CD4-positive, alpha-beta T cell (primary cell): ENCODE measurements at regions of chr5 and their contacts with region 1.

Region 1: GRCh38 chr5:180718810-180719453 is 20.9 kb downstream of the OR2Y1 start:
- DNase-seq: peak in 12 of 14 experiments; percentile 5 to 69 (median 24)
- ATAC-seq: no peak
- H3K4me3 ChIP-seq: no peak overlapping the region
- H3K4me3 Mint-ChIP-seq: no peak overlapping the region
- H3K27ac ChIP-seq: no peak overlapping the region
- H3K27ac Mint-ChIP-seq: no peak overlapping the region
- H3K4me1 ChIP-seq: no peaks in the 10 kb centered on the region
- H3K4me1 Mint-ChIP-seq: peaks cover 13% of the 10 kb centered on the region
- H3K27me3 ChIP-seq: no peaks in the 10 kb centered on the region
- H3K27me3 Mint-ChIP-seq: no peaks in the 10 kb centered on the region
- CTCF ChIP-seq: peak; percentile 86

Region 2: GRCh38 chr5:180523629-180524466 is 195.1 kb before region 1 on chr5:
- CTCF ChIA-PET with region 1: no interaction called
- POLR2A ChIA-PET with region 1: no interaction called
- intact Hi-C with region 1: loop called in 1 of 2 experiments (anchors 1 kb)
- DNase-seq: no peak
- ATAC-seq: no peak
- H3K4me3 ChIP-seq: no peak overlapping the region
- H3K4me3 Mint-ChIP-seq: no peak overlapping the region
- H3K27ac ChIP-seq: no peak overlapping the region
- H3K27ac Mint-ChIP-seq: peak overlapping the region; percentile 25
- H3K4me1 ChIP-seq: peaks cover 10% of the 10 kb centered on the region
- H3K4me1 Mint-ChIP-seq: peaks cover 71% of the 10 kb centered on the region
- H3K27me3 ChIP-seq: no peaks in the 10 kb centered on the region
- H3K27me3 Mint-ChIP-seq: no peaks in the 10 kb centered on the region
- CTCF ChIP-seq: no peak

Region 3: GRCh38 chr5:180605554-180606214 is 113.2 kb before region 1 on chr5:
- CTCF ChIA-PET with region 1: no interaction called
- POLR2A ChIA-PET with region 1: no interaction called
- intact Hi-C with region 1: loop called (anchors 5 to 10 kb)
- DNase-seq: peak; percentile 34 to 73 (median 50)
- ATAC-seq: peak; percentile 61
- H3K4me3 ChIP-seq: no peak overlapping the region
- H3K4me3 Mint-ChIP-seq: no peak overlapping the region
- H3K27ac ChIP-seq: no peak overlapping the region
- H3K27ac Mint-ChIP-seq: no peak overlapping the region
- H3K4me1 ChIP-seq: no peaks in the 10 kb centered on the region
- H3K4me1 Mint-ChIP-seq: no peaks in the 10 kb centered on the region
- H3K27me3 ChIP-seq: no peaks in the 10 kb centered on the region
- H3K27me3 Mint-ChIP-seq: no peaks in the 10 kb centered on the region
- CTCF ChIP-seq: peak; percentile 78

Region 4: DNA sequence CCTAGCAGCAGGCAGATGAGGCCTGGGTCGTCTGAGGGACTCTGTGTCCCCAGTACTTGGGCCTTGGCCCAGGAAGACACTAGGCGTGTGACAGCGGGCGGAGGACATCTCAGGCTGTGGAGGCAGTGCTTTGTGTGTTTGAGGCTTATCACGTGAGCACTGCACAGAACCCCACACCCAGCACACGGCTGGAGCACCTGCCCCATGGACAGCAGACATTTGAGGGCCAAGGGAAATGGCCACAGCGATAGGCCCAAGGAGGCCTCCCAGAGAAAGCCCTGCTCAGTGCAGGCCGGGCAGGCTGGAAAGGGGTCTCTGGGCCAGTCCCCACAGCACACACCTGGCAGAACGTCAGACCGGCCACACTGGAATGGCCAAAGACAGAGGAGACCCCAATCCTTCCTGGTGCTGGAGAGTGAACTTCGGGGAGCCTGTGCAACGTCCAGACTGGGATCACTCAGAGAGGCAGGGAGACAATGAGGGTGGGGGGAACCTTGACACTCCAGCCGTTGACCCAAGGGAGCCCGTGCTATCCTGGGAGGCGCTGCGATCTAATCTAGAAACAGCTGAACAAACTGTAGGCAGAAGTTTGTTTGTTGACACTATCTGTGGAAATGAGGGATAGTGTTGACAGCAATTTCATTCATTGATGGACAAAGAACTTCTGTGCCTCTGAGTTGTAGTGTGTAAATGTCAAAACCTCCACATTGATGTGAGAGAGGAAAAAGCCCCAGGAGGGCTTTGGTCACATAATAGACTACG is 49.9 kb before region 1 on chr5:
- CTCF ChIA-PET with region 1: no interaction called
- POLR2A ChIA-PET with region 1: interaction called, 4 read pairs
- intact Hi-C with region 1: loop called in 1 of 2 experiments (anchors 10 kb)
- DNase-seq: no peak
- ATAC-seq: no peak
- H3K4me3 ChIP-seq: no peak overlapping the region
- H3K4me3 Mint-ChIP-seq: no peak overlapping the region
- H3K27ac ChIP-seq: no peak overlapping the region
- H3K27ac Mint-ChIP-seq: no peak overlapping the region
- H3K4me1 ChIP-seq: peaks cover 13% of the 10 kb centered on the region
- H3K4me1 Mint-ChIP-seq: peaks cover 17% of the 10 kb centered on the region
- H3K27me3 ChIP-seq: peaks cover 0 to 6% of the 10 kb centered on the region in 2 experiments
- H3K27me3 Mint-ChIP-seq: no peaks in the 10 kb centered on the region
- CTCF ChIP-seq: no peak

Region 5: GRCh38 chr5:180683220-180683922 is 35.6 kb before region 1 on chr5:
- CTCF ChIA-PET with region 1: interaction called, 4 read pairs
- POLR2A ChIA-PET with region 1: interaction called, 15 read pairs
- intact Hi-C with region 1: loop called (anchors 2 kb)
- DNase-seq: peak in 2 of 14 experiments; percentile 30 to 40
- ATAC-seq: no peak
- H3K4me3 ChIP-seq: no peak overlapping the region
- H3K4me3 Mint-ChIP-seq: peak overlapping the region; percentile 67
- H3K27ac ChIP-seq: no peak overlapping the region
- H3K27ac Mint-ChIP-seq: peak overlapping the region; percentile 71
- H3K4me1 ChIP-seq: peaks cover 34% of the 10 kb centered on the region
- H3K4me1 Mint-ChIP-seq: peaks cover 42% of the 10 kb centered on the region
- H3K27me3 ChIP-seq: no peaks in the 10 kb centered on the region
- H3K27me3 Mint-ChIP-seq: no peaks in the 10 kb centered on the region
- CTCF ChIP-seq: peak; percentile 23

Region 6: GRCh38 chr5:180689071-180689694 is 29.7 kb before region 1 on chr5:
- CTCF ChIA-PET with region 1: interaction called, 4 read pairs
- POLR2A ChIA-PET with region 1: interaction called, 15 read pairs
- intact Hi-C with region 1: loop called (anchors 2 kb)
- DNase-seq: peak in 13 of 14 experiments; percentile 20 to 79 (median 49)
- ATAC-seq: peak; percentile 71
- H3K4me3 ChIP-seq: peak overlapping the region; percentile 39
- H3K4me3 Mint-ChIP-seq: peak overlapping the region; percentile 68
- H3K27ac ChIP-seq: peak overlapping the region; percentile 43 to 55
- H3K27ac Mint-ChIP-seq: peak overlapping the region; percentile 87
- H3K4me1 ChIP-seq: peaks cover 39% of the 10 kb centered on the region
- H3K4me1 Mint-ChIP-seq: peaks cover 74% of the 10 kb centered on the region
- H3K27me3 ChIP-seq: no peaks in the 10 kb centered on the region
- H3K27me3 Mint-ChIP-seq: no peaks in the 10 kb centered on the region
- CTCF ChIP-seq: no peak